ENCODE measurements at regions of chrX and their contacts with region 1.

Region 1: GRCh38 chrX:20412871-20413486 is 146.3 kb upstream of the RPS6KA3 start:
- DNase-seq: peak; percentile 35
- H3K4me3 Mint-ChIP-seq: peak overlapping the region; percentile 8
- H3K27ac Mint-ChIP-seq: peak overlapping the region; percentile 89
- H3K4me1 Mint-ChIP-seq: peaks cover 28% of the 10 kb centered on the region
- H3K27me3 Mint-ChIP-seq: no peaks in the 10 kb centered on the region

Region 2: GRCh38 chrX:20432746-20433387 is 19.9 kb after region 1 on chrX:
- intact Hi-C with region 1: loop called (anchors 2 kb)
- DNase-seq: no peak
- H3K4me3 Mint-ChIP-seq: peak overlapping the region; percentile 40
- H3K27ac Mint-ChIP-seq: peak overlapping the region; percentile 92
- H3K4me1 Mint-ChIP-seq: peaks cover 30% of the 10 kb centered on the region
- H3K27me3 Mint-ChIP-seq: no peaks in the 10 kb centered on the region